ENCODE measurements at regions of chr7 and their contacts with region 1.

Region 1: GRCh38 chr7:124840435-124840834 is 74.8 kb upstream of the GPR37 start:
- DNase-seq: no peak
- H3K4me3 ChIP-seq: no peak overlapping the region
- H3K27ac ChIP-seq: no peak overlapping the region
- H3K27me3 ChIP-seq: no peaks in the 10 kb centered on the region
- CTCF ChIP-seq: peak; percentile 22; the same call in 1 of the 2 replicates

Region 2: GRCh38 chr7:124101173-124101768 is 739.2 kb before region 1 on chr7:
- CTCF ChIA-PET with region 1: interaction called, 12 read pairs
- POLR2A ChIA-PET with region 1: interaction called, 3 read pairs
- DNase-seq: no peak
- H3K4me3 ChIP-seq: no peak overlapping the region
- H3K27ac ChIP-seq: no peak overlapping the region
- H3K27me3 ChIP-seq: no peaks in the 10 kb centered on the region
- CTCF ChIP-seq: peak; percentile 58

Measured in AG04450 (cell line).